Activated T-helper 2 cell treated with anti-CD3 and anti-CD28 coated beads, Interferon-gamma antibody, Interleukin-2, Interleukin-4, amounts not matched to agents 10 μg/mL and 5 μg/mL and 100 μg/mL, durations not matched to agents 14 hours and 24 hours and 36 hours (primary cell): ENCODE measurements at regions of chr13 and their contacts with region 1.

Region 1: GRCh38 chr13:52665325-52665724 is 12.7 kb downstream of the SUGT1 start:
- DNase-seq: no peak
- H3K4me3 Mint-ChIP-seq: no peak overlapping the region
- H3K27ac Mint-ChIP-seq: no peak overlapping the region
- H3K4me1 Mint-ChIP-seq: peaks cover 3% of the 10 kb centered on the region
- H3K27me3 Mint-ChIP-seq: no peaks in the 10 kb centered on the region

Region 2: DNA sequence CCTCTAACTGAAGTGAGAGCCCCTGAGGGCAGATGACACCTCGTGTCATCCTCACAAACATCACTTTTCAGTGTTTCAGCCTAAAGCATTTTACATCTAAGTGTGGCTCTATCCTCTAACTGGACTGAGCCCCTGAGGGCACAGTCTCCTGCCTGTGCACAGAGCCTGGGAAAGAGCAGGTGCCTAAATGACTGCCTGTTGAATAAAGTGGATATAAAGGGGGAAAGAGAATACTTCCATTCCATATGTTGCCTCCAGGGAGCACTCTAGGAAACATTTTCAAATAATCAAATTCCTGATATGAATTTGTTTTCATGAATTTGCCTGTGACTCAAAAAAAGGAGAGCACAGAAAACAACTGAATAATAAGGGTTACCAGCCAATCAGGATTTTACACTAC is 42.0 kb after region 1 on chr13:
- intact Hi-C with region 1: no loop called
- DNase-seq: no peak
- H3K4me3 Mint-ChIP-seq: no peak overlapping the region
- H3K27ac Mint-ChIP-seq: no peak overlapping the region
- H3K4me1 Mint-ChIP-seq: no peaks in the 10 kb centered on the region
- H3K27me3 Mint-ChIP-seq: peaks cover 4% of the 10 kb centered on the region

Region 3: DNA sequence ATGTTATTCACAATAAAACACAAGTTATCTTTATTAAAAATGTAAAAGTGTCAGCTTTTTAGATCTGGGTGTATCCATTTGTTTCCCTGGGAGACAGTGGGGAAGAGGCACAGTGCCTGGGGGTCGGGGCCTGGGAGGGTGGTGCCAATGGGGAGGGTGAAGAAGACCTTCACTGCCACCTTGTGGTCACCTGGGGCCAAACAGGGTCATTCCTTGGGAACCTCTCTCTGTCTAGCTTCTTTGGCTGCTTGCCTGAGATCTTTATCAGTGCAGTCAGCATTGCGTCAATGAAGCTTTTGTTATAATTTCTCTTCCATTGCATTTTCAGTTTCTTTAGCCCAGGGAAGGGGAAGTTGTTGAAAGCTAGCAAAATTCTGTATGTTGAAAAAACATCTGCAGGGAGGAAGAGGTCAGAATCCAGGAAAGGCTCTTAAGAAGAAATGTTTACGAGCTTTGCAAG is 144.0 kb after region 1 on chr13:
- intact Hi-C with region 1: loop called (anchors 5 kb)
- DNase-seq: peak; percentile 51
- H3K4me3 Mint-ChIP-seq: no peak overlapping the region
- H3K27ac Mint-ChIP-seq: no peak overlapping the region
- H3K4me1 Mint-ChIP-seq: peaks cover 6% of the 10 kb centered on the region
- H3K27me3 Mint-ChIP-seq: no peaks in the 10 kb centered on the region